Endothelial cell of umbilical vein (primary cell): ENCODE measurements at regions of chr5 and their contacts with region 1.

Region 1: DNA sequence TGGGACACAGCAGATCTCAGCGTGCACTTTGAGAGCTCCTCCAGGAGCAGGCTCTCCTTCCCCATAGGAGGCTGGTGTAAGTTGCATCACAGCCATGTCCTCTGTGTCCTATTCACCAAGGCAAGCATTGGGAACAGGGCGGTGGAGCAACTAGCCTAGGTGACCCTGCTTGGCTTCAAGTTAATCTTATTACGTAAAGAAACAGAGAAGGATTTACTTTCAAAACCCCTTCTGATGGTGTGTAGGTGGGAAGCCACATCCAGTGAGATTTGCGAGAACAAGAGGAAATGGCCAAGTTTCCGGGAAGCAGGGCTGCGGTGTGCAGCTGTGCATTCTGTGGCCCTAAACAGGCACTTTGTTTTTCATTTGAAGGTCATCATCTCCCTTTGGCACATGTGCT is 80.2 kb downstream of the TRIO start:
- DNase-seq: peak; percentile 68
- H3K4me3 ChIP-seq: no peak overlapping the region
- H3K27ac ChIP-seq: peak overlapping the region; percentile 36
- H3K4me1 ChIP-seq: peaks cover 55% of the 10 kb centered on the region
- H3K27me3 ChIP-seq: no peaks in the 10 kb centered on the region
- CTCF ChIP-seq: no peak
- POLR2A ChIP-seq: peak; percentile 53

Region 2: GRCh38 chr5:14156650-14157493 is 66.5 kb before region 1 on chr5:
- CTCF ChIA-PET with region 1: interaction called, 7 read pairs
- POLR2A ChIA-PET with region 1: no interaction called
- dilution Hi-C with region 1: no loop called
- intact Hi-C with region 1: loop called (anchors 2 kb)
- DNase-seq: peak; percentile 91
- H3K4me3 ChIP-seq: peak overlapping the region in 1 of 3 experiments; percentile 49
- H3K27ac ChIP-seq: peak overlapping the region; percentile 97
- H3K4me1 ChIP-seq: peaks cover 55% of the 10 kb centered on the region
- H3K27me3 ChIP-seq: no peaks in the 10 kb centered on the region
- CTCF ChIP-seq: no peak
- POLR2A ChIP-seq: no peak

Region 3: GRCh38 chr5:14264604-14265316 is 41.4 kb after region 1 on chr5:
- CTCF ChIA-PET with region 1: interaction called, 7 read pairs
- POLR2A ChIA-PET with region 1: no interaction called
- dilution Hi-C with region 1: no loop called
- intact Hi-C with region 1: loop called (anchors 1 kb)
- DNase-seq: peak; percentile 96
- H3K4me3 ChIP-seq: peak overlapping the region in 2 of 3 experiments; percentile 2 to 51
- H3K27ac ChIP-seq: peak overlapping the region; percentile 76
- H3K4me1 ChIP-seq: peaks cover 71% of the 10 kb centered on the region
- H3K27me3 ChIP-seq: no peaks in the 10 kb centered on the region
- CTCF ChIP-seq: no peak
- POLR2A ChIP-seq: peak; percentile 22

Region 4: DNA sequence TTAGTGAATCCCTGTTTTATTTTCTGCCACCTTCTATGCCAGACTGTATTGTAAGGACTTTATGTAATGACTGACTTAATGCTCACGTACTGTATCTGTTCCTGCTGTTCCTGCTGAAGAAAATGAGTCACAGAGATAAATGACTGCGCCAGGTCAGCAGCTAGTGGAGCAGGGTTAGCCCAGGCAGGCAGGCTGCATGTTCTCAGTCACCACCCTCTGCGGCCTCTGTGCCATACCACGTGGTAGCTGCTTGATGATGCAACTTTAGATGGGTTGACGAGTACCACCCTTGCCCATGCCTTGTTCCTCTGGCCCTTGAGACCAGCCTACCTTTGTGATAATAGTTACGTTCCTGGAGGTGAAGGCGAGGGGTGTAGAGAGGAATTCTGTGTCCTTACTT is 81.7 kb after region 1 on chr5:
- CTCF ChIA-PET with region 1: no interaction called
- POLR2A ChIA-PET with region 1: no interaction called
- dilution Hi-C with region 1: no loop called
- intact Hi-C with region 1: no loop called
- DNase-seq: peak; percentile 33
- H3K4me3 ChIP-seq: no peak overlapping the region
- H3K27ac ChIP-seq: no peak overlapping the region
- H3K4me1 ChIP-seq: peaks cover 3% of the 10 kb centered on the region
- H3K27me3 ChIP-seq: no peaks in the 10 kb centered on the region
- CTCF ChIP-seq: no peak
- POLR2A ChIP-seq: no peak